ENCODE measurements at regions of chr19 and their contacts with region 1.

Region 1: DNA sequence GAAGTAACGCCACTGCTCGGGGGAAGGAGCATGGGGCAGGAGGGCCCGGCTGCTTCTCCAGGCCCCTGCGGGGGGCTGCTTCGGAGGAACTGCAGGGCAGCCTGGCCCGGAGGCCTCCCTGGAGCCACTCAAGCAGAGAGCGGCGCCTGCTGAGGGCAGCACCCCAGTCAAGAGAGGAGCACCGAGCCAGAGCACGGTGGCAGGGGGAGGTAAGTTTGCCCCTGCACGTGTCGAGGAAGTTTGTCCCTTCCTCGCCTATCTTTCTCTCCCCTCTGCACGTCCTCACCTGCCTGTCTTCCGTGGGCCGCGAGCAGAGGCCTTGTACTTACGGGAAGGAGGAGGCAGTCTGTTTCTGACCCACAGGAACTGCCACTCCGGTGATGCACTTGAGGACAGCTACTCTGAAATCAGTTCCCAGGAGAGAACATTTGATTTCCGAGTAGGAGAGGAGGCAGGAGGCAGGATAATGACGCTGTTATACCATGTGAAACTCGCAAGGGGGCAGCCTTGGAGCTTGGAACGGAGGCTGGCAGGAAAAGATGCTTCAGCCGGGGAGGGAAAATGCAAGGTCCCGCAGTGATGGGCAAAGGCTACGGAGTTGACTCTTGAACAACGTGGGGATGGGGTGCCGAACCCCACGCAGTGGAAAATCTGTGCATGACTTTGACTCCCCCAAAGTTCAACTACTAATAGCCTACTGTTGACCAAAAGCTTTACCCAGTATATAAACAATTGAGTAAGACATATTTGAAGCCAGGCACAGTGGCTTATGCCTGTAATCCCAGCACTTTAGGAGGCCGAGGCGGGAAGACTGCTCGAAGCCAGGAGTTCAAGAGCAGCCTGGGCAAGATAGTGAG is 5.0 kb downstream of the FFAR1 start:
- DNase-seq: peak; percentile 66 to 71
- H3K4me3 ChIP-seq: no peak overlapping the region
- H3K27ac ChIP-seq: no peak overlapping the region
- H3K4me1 ChIP-seq: no peaks in the 10 kb centered on the region
- H3K27me3 ChIP-seq: no peaks in the 10 kb centered on the region
- CTCF ChIP-seq: peak; percentile 93

Region 2: DNA sequence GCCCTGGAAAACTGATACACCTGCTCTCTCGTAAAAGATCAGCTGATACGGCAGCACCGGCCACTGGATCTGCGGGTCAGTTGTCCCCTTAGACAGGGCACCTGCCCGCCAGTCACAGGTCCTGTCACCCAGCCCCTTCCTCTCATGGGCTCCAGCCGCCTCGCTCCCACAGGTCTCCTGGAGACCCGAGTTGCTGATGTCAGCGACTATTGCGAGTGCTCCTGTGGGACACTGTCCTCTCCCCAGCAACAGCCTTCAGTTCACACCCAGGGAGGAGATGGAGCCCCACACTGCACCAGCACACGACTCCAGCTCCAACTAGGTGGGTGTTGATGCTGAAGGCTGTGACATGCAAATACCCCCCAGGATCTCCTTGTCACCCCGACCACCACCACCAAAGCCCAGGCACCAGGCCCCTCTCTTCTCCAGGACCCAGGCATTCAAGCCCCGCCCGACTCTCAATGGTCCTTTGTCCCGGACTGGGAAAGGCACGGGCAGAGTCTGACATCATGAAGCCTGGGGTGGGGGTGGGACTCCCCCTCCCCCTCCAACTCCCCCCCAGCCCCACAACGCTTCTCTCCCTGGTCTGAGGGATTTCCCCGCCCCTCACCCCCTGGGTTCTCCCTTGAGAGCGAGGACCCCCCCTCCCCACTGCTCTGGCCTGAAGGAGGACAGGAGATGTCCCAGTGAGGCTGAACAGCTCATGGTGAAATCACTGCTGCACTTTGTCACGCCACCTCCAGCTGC is 62.1 kb before region 1 on chr19:
- CTCF ChIA-PET with region 1: interaction called, 13 read pairs
- POLR2A ChIA-PET with region 1: no interaction called
- intact Hi-C with region 1: no loop called
- DNase-seq: no peak
- H3K4me3 ChIP-seq: no peak overlapping the region
- H3K27ac ChIP-seq: no peak overlapping the region
- H3K4me1 ChIP-seq: peaks cover 11% of the 10 kb centered on the region; the same call in 1 of the 2 replicates
- H3K27me3 ChIP-seq: 0 out of 2 replicates have a peak, but pooled peaks cover 3% of the 10 kb centered on the region
- CTCF ChIP-seq: no peak

Region 3: GRCh38 chr19:35313597-35313996 is 39.1 kb before region 1 on chr19:
- CTCF ChIA-PET with region 1: interaction called, 12 read pairs
- POLR2A ChIA-PET with region 1: no interaction called
- intact Hi-C with region 1: no loop called
- DNase-seq: peak; percentile 82 to 87
- H3K4me3 ChIP-seq: no peak overlapping the region; the same call in 1 of the 2 replicates
- H3K27ac ChIP-seq: peak overlapping the region; percentile 28
- H3K4me1 ChIP-seq: peaks cover 88% of the 10 kb centered on the region
- H3K27me3 ChIP-seq: no peaks in the 10 kb centered on the region
- CTCF ChIP-seq: no peak

Region 4: DNA sequence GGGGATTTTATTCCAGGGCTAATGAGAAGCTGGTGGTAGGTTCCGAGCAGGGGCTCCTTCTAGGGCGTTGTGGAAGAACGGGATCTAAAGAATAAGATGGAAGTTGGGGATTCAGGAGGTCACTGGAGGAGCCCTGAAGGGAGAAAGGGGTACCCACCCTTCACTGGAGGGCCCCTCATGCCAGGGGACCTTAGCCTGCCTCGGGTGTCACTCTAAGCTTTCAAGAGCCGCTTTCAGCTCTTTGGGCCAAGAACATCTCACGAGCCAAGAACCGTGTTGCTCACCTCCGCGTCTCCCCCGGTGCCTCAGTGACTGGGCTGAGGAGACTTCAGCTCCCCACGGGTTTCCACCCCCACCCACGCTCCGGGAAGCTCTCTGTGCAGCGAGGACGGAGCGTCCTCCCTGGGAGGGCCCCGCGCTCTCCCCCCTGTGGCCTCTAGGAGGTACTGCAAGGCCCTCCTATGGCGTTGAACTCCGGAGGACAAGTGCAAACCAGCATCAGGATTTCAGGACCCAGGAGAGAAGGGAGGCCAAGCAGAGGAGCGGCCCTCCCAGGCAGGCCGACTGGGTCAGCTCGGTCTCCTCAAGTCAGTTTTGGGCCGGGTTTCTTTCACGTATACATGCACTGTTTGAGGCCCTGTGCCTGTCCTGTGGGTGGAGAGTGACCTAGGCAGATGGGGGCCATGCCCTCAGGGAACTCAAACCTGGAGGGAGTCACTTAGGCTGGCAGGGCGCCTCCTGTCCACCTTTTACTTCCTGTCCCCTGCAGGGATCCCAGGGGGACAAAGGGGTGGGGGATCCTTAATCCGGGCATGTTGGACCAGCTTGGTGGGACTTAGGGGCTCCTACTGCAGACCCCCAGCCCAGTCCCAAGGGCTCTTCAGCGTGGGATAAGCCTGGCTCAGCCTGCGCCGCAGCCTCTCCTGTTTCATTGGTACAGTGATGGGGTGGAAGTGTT is 142.7 kb after region 1 on chr19:
- CTCF ChIA-PET with region 1: interaction called, 3 read pairs
- POLR2A ChIA-PET with region 1: no interaction called
- intact Hi-C with region 1: loop called (anchors 1 kb)
- DNase-seq: peak; percentile 53 to 64
- H3K4me3 ChIP-seq: no peak overlapping the region; the same call in 1 of the 2 replicates
- H3K27ac ChIP-seq: no peak overlapping the region
- H3K4me1 ChIP-seq: peaks cover 10% of the 10 kb centered on the region
- H3K27me3 ChIP-seq: peaks cover 9% of the 10 kb centered on the region; the same call in 1 of the 2 replicates
- CTCF ChIP-seq: peak; percentile 97

Region 5: GRCh38 chr19:35693830-35694599 is 341.3 kb after region 1 on chr19:
- CTCF ChIA-PET with region 1: no interaction called
- POLR2A ChIA-PET with region 1: interaction called, 24 read pairs
- intact Hi-C with region 1: no loop called
- DNase-seq: peak; percentile 69 to 84
- H3K4me3 ChIP-seq: no peak overlapping the region
- H3K27ac ChIP-seq: no peak overlapping the region
- H3K4me1 ChIP-seq: peaks cover 13% of the 10 kb centered on the region
- H3K27me3 ChIP-seq: no peaks in the 10 kb centered on the region
- CTCF ChIP-seq: peak; percentile 91

Measured in PC-9 (cell line).